ENCODE measurements at regions of chr16 and their contacts with region 1.

Region 1: DNA sequence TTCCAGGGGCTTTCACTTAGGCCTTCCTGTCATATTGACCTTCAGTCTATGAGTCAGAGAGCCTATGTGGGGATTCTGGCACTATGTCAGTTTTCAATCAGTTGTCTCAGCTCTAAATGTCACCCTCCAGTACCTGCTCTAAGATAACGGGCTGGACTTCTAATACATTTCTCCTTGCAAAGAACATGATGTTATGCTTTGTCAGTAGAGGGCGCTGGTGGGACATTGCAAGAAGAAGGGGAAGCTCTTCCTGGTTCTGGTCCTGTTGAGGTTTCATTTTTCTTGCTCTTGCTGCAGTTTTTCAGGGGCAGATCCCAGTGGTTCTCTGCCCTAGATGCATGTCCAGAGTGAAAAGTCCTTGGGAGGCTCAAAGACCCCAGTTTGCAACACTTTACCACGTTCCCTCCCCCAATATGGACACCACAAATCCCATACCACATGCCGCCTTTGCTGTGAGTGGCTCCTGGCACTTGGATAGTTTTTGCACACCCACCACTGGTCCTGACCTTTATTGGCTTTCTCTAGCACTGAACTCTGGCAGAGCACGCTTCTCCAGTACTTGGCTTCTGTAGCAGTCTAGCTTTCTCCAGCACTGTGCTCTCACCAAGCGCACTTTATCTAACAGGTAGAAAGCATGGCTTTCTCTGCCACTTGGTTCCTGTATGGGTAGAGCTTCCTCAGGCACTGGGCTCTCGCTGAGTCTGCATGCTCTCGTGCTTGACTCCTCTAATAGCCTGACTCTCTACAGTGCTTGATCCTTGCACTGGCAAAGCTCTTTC is 49.0 kb downstream of the BCL7C start:
- DNase-seq: peak; percentile 83
- ATAC-seq: peak; percentile 97
- H3K4me3 Mint-ChIP-seq: peak overlapping the region; percentile 9
- H3K27ac Mint-ChIP-seq: peak overlapping the region; percentile 51
- H3K4me1 Mint-ChIP-seq: peaks cover 13% of the 10 kb centered on the region
- H3K27me3 Mint-ChIP-seq: no peaks in the 10 kb centered on the region
- CTCF ChIP-seq: peak; percentile 89

Region 2: GRCh38 chr16:30723809-30724550 is 120.9 kb before region 1 on chr16:
- CTCF ChIA-PET with region 1: no interaction called
- POLR2A ChIA-PET with region 1: no interaction called
- intact Hi-C with region 1: no loop called
- DNase-seq: no peak
- ATAC-seq: no peak
- H3K4me3 Mint-ChIP-seq: no peak overlapping the region
- H3K27ac Mint-ChIP-seq: peak overlapping the region; percentile 8
- H3K4me1 Mint-ChIP-seq: peaks cover 2% of the 10 kb centered on the region
- H3K27me3 Mint-ChIP-seq: no peaks in the 10 kb centered on the region
- CTCF ChIP-seq: no peak

Region 3: DNA sequence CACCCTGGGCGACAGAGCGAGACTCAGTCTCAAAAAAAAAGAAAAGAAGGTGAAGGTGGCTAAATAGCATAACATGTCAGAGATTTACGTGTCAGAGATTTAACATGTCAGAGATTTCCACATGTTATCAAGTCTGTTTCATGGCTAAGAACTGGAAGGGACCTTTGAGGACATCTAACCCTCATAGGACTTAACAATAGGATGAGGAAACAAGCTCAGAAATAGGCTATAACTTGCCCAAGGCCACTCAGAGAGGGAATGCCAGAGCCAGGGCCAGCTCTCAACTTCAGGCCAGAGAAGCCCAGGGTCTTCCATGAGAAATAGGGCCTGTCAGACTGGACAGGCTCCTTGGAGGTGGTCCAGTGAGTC is 31.1 kb before region 1 on chr16:
- CTCF ChIA-PET with region 1: interaction called, 32 read pairs
- POLR2A ChIA-PET with region 1: interaction called, 3 read pairs
- intact Hi-C with region 1: no loop called
- DNase-seq: no peak
- ATAC-seq: no peak
- H3K4me3 Mint-ChIP-seq: peak overlapping the region; percentile 73
- H3K27ac Mint-ChIP-seq: peak overlapping the region; percentile 85
- H3K4me1 Mint-ChIP-seq: peaks cover 12% of the 10 kb centered on the region
- H3K27me3 Mint-ChIP-seq: no peaks in the 10 kb centered on the region
- CTCF ChIP-seq: no peak

Region 4: GRCh38 chr16:30874821-30875717 is 30.2 kb after region 1 on chr16:
- CTCF ChIA-PET with region 1: interaction called, 30 read pairs
- POLR2A ChIA-PET with region 1: interaction called, 6 read pairs
- intact Hi-C with region 1: no loop called
- DNase-seq: peak; percentile 91
- ATAC-seq: peak; percentile 79
- H3K4me3 Mint-ChIP-seq: peak overlapping the region; percentile 98
- H3K27ac Mint-ChIP-seq: peak overlapping the region; percentile 99
- H3K4me1 Mint-ChIP-seq: peaks cover 34% of the 10 kb centered on the region
- H3K27me3 Mint-ChIP-seq: no peaks in the 10 kb centered on the region
- CTCF ChIP-seq: no peak

Region 5: GRCh38 chr16:30914830-30915229 is 70.0 kb after region 1 on chr16:
- CTCF ChIA-PET with region 1: interaction called, 82 read pairs
- POLR2A ChIA-PET with region 1: interaction called, 3 read pairs
- intact Hi-C with region 1: no loop called
- DNase-seq: no peak
- ATAC-seq: no peak
- H3K4me3 Mint-ChIP-seq: no peak overlapping the region
- H3K27ac Mint-ChIP-seq: no peak overlapping the region
- H3K4me1 Mint-ChIP-seq: no peaks in the 10 kb centered on the region
- H3K27me3 Mint-ChIP-seq: no peaks in the 10 kb centered on the region
- CTCF ChIP-seq: no peak

Region 6: DNA sequence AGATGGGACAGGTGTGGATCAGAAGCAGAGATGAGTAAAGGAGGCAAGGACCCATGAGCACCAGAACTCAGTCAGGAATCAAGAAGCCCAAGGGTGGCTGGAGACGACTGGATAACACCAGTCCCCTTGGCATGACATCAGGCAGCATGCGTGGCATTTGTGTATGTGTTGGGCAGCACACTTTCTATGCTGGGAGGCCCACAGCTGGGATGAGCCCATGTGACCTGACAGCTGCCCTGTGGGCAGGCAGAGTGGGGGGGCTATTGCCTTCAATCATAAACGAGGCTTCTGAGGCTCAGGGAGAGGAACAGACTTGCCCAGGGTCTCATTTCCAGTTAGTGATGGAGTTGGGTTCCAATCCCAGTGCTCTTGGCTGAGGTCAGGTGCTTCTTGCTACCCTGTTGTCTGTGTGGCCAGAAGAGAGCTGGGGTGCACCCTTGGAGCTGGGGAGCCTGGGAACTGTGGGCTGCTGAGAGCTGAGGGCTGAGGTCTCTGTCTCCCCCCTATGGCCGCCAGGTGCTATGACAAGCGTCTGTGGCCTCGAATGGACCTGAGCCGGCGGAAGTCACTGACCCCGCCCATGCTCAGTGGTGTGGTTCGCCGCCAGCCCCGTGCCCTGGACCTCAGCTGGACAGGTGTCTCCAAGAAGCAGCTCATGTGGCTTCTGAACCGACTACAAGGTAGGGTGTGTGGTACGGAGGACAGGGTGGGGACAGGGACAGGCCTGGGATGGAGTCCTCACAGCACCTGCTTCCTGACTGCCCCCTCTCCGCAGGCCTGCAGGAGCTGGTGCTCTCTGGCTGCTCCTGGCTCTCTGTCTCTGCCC is 97.0 kb after region 1 on chr16:
- CTCF ChIA-PET with region 1: interaction called, 63 read pairs
- POLR2A ChIA-PET with region 1: no interaction called
- intact Hi-C with region 1: no loop called
- DNase-seq: peak; percentile 80
- ATAC-seq: peak; percentile 98
- H3K4me3 Mint-ChIP-seq: peak overlapping the region; percentile 33
- H3K27ac Mint-ChIP-seq: no peak overlapping the region
- H3K4me1 Mint-ChIP-seq: peaks cover 22% of the 10 kb centered on the region
- H3K27me3 Mint-ChIP-seq: no peaks in the 10 kb centered on the region
- CTCF ChIP-seq: peak; percentile 91